ENCODE measurements at regions of chr1 and their contacts with region 1.

Region 1: DNA sequence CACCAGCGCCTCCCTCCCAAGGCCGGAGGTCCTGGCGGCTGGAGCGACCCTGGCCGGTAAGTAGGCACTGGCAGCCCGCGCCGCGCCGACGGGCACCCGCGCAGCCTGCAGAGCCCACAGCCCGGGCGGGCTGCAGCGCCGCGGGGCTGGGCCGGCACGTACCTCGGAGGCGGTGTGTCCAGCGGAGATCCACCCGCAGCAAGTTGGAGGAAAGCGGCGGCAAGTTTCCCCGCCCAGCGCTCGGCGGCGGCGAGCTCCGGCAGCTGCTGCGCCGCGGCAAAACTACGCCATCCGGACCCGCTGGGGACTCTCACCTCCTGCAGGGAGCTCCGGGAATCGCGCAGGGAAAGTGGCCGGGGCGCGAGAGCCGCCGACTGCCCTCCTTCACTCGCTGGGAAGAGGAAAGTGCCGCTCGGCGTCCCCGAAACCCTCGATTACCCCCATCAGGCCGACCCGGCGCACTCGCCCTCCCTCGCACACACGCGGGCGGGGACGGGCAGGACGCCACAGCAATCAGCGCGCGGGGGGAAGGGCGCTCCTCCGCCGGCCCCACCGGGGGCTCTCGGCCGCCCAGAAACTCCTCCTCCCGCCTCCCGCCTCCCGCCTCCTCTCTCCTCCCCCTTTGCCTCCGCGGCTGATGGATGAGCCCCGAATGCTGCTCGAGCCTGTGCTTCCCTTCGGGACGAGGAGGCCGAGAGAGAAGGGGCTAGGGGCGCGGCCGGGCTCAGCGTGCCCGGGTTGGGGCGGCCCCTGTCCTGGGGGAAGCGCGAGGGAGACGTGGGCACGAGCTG is at the start of gene TGFBR3:
- DNase-seq: peak; percentile 61 to 79 (median 73)
- ATAC-seq: peak; percentile 84
- H3K4me3 ChIP-seq: peak within 1 kb of the TSS; percentile 54
- H3K4me3 Mint-ChIP-seq: peak within 1 kb of the TSS; percentile 86 to 99 (median 94)
- H3K27ac ChIP-seq: peak within 1 kb of the TSS; percentile 68
- H3K27ac Mint-ChIP-seq: peak within 1 kb of the TSS; percentile 78 to 94 (median 85)
- H3K4me1 ChIP-seq: peaks cover 12 to 15% of the 10 kb centered on the region in 2 donors
- H3K4me1 Mint-ChIP-seq: peaks cover 21 to 43% (median 27%) of the 10 kb centered on the region in 7 donors
- H3K27me3 ChIP-seq: no peaks in the 10 kb centered on the region
- H3K27me3 Mint-ChIP-seq: peaks cover 0 to 42% (median 0%) of the 10 kb centered on the region in 5 donors
- total RNA-seq, gene TGFBR3: 10.1 to 36.3 (median 18.5) TPM

Region 2: GRCh38 chr1:91511386-91511785 is 374.5 kb before region 1 on chr1:
- CTCF ChIA-PET with region 1: interaction called, 42 read pairs
- POLR2A ChIA-PET with region 1: no interaction called
- intact Hi-C with region 1: loop called (anchors 1 kb)
- DNase-seq: peak in 6 of 9 donors; percentile 22 to 56 (median 43)
- ATAC-seq: peak; percentile 49
- H3K4me3 ChIP-seq: no peak overlapping the region
- H3K4me3 Mint-ChIP-seq: no peak overlapping the region
- H3K27ac ChIP-seq: no peak overlapping the region
- H3K27ac Mint-ChIP-seq: no peak overlapping the region
- H3K4me1 ChIP-seq: peaks cover 0 to 14% of the 10 kb centered on the region in 2 donors
- H3K4me1 Mint-ChIP-seq: peaks cover 0 to 16% (median 5%) of the 10 kb centered on the region in 7 donors
- H3K27me3 ChIP-seq: no peaks in the 10 kb centered on the region
- H3K27me3 Mint-ChIP-seq: no peaks in the 10 kb centered on the region

Region 3: DNA sequence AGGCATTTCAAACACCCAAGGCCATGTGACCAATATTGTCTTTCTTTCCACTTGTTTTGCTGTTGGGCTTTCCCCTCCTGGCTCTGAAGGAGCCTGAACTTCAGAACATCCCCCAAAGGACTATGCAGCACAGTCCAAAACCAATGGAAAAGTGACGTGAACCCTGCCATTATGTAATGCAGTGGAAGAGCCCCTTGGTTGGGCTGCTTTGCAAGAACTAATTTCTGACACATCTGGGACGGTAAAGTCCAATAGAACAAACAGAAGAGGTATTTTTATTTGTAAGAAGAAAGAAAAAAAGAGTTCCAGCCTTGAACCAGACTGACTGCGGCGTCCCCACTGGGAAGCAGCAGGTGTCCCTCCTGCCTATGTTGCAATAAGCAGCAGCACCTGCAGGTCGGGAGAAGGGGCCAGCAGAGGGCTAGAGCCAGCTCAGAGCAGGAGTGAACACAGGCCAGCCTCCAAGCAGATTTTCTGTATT is 268.6 kb before region 1 on chr1:
- CTCF ChIA-PET with region 1: no interaction called
- POLR2A ChIA-PET with region 1: no interaction called
- intact Hi-C with region 1: loop called in 1 of 2 experiments (anchors 5 kb)
- DNase-seq: peak in 4 of 9 donors; percentile 5 to 14 (median 8)
- ATAC-seq: no peak
- H3K4me3 ChIP-seq: no peak overlapping the region
- H3K4me3 Mint-ChIP-seq: no peak overlapping the region
- H3K27ac ChIP-seq: no peak overlapping the region
- H3K27ac Mint-ChIP-seq: no peak overlapping the region
- H3K4me1 ChIP-seq: no peaks in the 10 kb centered on the region
- H3K4me1 Mint-ChIP-seq: peaks cover 0 to 6% (median 0%) of the 10 kb centered on the region in 7 donors
- H3K27me3 ChIP-seq: no peaks in the 10 kb centered on the region
- H3K27me3 Mint-ChIP-seq: peaks cover 0 to 18% (median 0%) of the 10 kb centered on the region in 5 donors

Region 4: GRCh38 chr1:91725989-91726721 is 159.8 kb before region 1 on chr1:
- CTCF ChIA-PET with region 1: no interaction called
- POLR2A ChIA-PET with region 1: no interaction called
- intact Hi-C with region 1: no loop called
- DNase-seq: no peak
- ATAC-seq: no peak
- H3K4me3 ChIP-seq: no peak overlapping the region
- H3K4me3 Mint-ChIP-seq: no peak overlapping the region
- H3K27ac ChIP-seq: no peak overlapping the region
- H3K27ac Mint-ChIP-seq: no peak overlapping the region
- H3K4me1 ChIP-seq: peaks cover 3 to 15% of the 10 kb centered on the region in 2 donors
- H3K4me1 Mint-ChIP-seq: peaks cover 8 to 21% (median 15%) of the 10 kb centered on the region in 7 donors
- H3K27me3 ChIP-seq: no peaks in the 10 kb centered on the region
- H3K27me3 Mint-ChIP-seq: no peaks in the 10 kb centered on the region

Region 5: GRCh38 chr1:91754348-91754747 is 131.6 kb before region 1 on chr1:
- CTCF ChIA-PET with region 1: no interaction called
- POLR2A ChIA-PET with region 1: interaction called, 10 read pairs
- intact Hi-C with region 1: no loop called
- DNase-seq: peak in 1 of 9 donors; percentile 58
- ATAC-seq: peak; percentile 31
- H3K4me3 ChIP-seq: no peak overlapping the region
- H3K4me3 Mint-ChIP-seq: no peak overlapping the region
- H3K27ac ChIP-seq: no peak overlapping the region
- H3K27ac Mint-ChIP-seq: peak overlapping the region in 2 of 9 donors; percentile 3 to 30
- H3K4me1 ChIP-seq: peaks cover 0 to 22% of the 10 kb centered on the region in 2 donors
- H3K4me1 Mint-ChIP-seq: peaks cover 0 to 27% (median 0%) of the 10 kb centered on the region in 7 donors
- H3K27me3 ChIP-seq: no peaks in the 10 kb centered on the region
- H3K27me3 Mint-ChIP-seq: peaks cover 0 to 2% (median 0%) of the 10 kb centered on the region in 5 donors

Region 6: GRCh38 chr1:91864017-91864700 is 21.8 kb before region 1 on chr1:
- CTCF ChIA-PET with region 1: no interaction called
- POLR2A ChIA-PET with region 1: no interaction called
- intact Hi-C with region 1: no loop called
- DNase-seq: no peak
- ATAC-seq: no peak
- H3K4me3 ChIP-seq: no peak overlapping the region
- H3K4me3 Mint-ChIP-seq: no peak overlapping the region
- H3K27ac ChIP-seq: no peak overlapping the region
- H3K27ac Mint-ChIP-seq: no peak overlapping the region
- H3K4me1 ChIP-seq: no peaks in the 10 kb centered on the region
- H3K4me1 Mint-ChIP-seq: peaks cover 0 to 35% (median 6%) of the 10 kb centered on the region in 7 donors
- H3K27me3 ChIP-seq: no peaks in the 10 kb centered on the region
- H3K27me3 Mint-ChIP-seq: peaks cover 0 to 10% (median 0%) of the 10 kb centered on the region in 5 donors

Region 7: GRCh38 chr1:91924146-91924545 is 38.2 kb after region 1 on chr1:
- CTCF ChIA-PET with region 1: interaction called, 5 read pairs
- POLR2A ChIA-PET with region 1: no interaction called
- intact Hi-C with region 1: loop called (anchors 1 to 2 kb)
- DNase-seq: no peak
- ATAC-seq: no peak
- H3K4me3 ChIP-seq: no peak overlapping the region
- H3K4me3 Mint-ChIP-seq: no peak overlapping the region
- H3K27ac ChIP-seq: no peak overlapping the region
- H3K27ac Mint-ChIP-seq: no peak overlapping the region
- H3K4me1 ChIP-seq: peaks cover 0 to 3% of the 10 kb centered on the region in 2 donors
- H3K4me1 Mint-ChIP-seq: peaks cover 0 to 7% (median 0%) of the 10 kb centered on the region in 7 donors
- H3K27me3 ChIP-seq: no peaks in the 10 kb centered on the region
- H3K27me3 Mint-ChIP-seq: peaks cover 0 to 3% (median 0%) of the 10 kb centered on the region in 5 donors

Region 8: GRCh38 chr1:92298573-92299476 is 412.9 kb after region 1 on chr1 and contains the starts of genes GLMN and RPAP2:
- CTCF ChIA-PET with region 1: interaction called, 4 read pairs
- POLR2A ChIA-PET with region 1: no interaction called
- intact Hi-C with region 1: loop called in 1 of 2 experiments (anchors 5 kb)
- DNase-seq: peak; percentile 55 to 86 (median 75)
- ATAC-seq: peak; percentile 97
- H3K4me3 ChIP-seq: peak within 1 kb of the TSS; percentile 93
- H3K4me3 Mint-ChIP-seq: peak within 1 kb of the TSS; percentile 93 to 99 (median 97)
- H3K27ac ChIP-seq: peak within 1 kb of the TSS; percentile 98
- H3K27ac Mint-ChIP-seq: peak within 1 kb of the TSS; percentile 91 to 99 (median 97)
- H3K4me1 ChIP-seq: peaks cover 10 to 19% of the 10 kb centered on the region in 2 donors
- H3K4me1 Mint-ChIP-seq: peaks cover 30 to 61% (median 48%) of the 10 kb centered on the region in 7 donors
- H3K27me3 ChIP-seq: no peaks in the 10 kb centered on the region
- H3K27me3 Mint-ChIP-seq: no peaks in the 10 kb centered on the region
- total RNA-seq, gene GLMN: 13.9 to 27.0 (median 14.3) TPM
- total RNA-seq, gene RPAP2: 29.5 to 50.7 (median 42.3) TPM

Measured in naive thymus-derived CD4-positive, alpha-beta T cell (primary cell).